ENCODE measurements at regions of chr10 and their contacts with region 1.

Region 1: GRCh38 chr10:71812016-71812912 is 38.8 kb downstream of the PSAP start:
- DNase-seq: peak; percentile 79
- ATAC-seq: peak; percentile 94
- H3K4me3 Mint-ChIP-seq: no peak overlapping the region
- H3K27ac Mint-ChIP-seq: no peak overlapping the region
- H3K4me1 Mint-ChIP-seq: peaks cover 2% of the 10 kb centered on the region
- H3K27me3 Mint-ChIP-seq: no peaks in the 10 kb centered on the region
- CTCF ChIP-seq: no peak

Region 2: GRCh38 chr10:71314028-71314693 is 498.1 kb before region 1 on chr10:
- CTCF ChIA-PET with region 1: interaction called, 14 read pairs
- POLR2A ChIA-PET with region 1: no interaction called
- intact Hi-C with region 1: loop called (anchors 1 kb)
- DNase-seq: peak; percentile 29
- ATAC-seq: peak; percentile 40
- H3K4me3 Mint-ChIP-seq: no peak overlapping the region
- H3K27ac Mint-ChIP-seq: no peak overlapping the region
- H3K4me1 Mint-ChIP-seq: peaks cover 15% of the 10 kb centered on the region
- H3K27me3 Mint-ChIP-seq: peaks cover 10% of the 10 kb centered on the region
- CTCF ChIP-seq: no peak

Region 3: DNA sequence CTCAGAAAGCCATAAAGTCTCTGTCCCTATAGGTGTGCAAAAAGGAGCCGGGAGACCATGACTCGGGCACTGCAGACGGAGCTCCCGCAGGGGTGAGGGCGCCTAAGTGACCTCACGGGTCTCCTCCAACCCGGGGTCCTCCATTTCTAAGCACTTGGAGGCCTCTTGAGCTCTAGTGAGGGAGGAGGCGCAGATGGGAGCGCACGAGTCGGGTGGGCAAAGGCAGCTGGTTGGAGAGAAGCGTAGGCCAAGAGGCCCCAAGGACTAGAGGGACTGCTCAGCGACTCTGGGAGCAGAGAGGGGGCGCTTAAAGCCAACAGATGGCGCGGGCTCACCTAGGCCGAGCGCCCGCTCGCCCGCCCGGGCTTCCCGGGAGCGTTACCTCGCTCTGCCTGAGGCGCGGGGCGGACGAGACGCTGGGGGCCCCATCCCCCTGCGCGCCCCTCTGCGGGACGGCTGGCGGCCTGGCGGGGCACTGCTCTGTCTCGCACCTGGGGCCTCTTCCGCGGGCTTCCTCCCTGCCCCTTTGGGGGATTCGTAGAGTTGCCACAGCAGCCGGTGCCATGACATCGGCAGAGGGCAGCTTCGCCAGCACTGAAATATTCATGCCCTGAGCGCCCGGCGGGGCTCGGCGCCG is 416.1 kb before region 1 on chr10:
- CTCF ChIA-PET with region 1: no interaction called
- POLR2A ChIA-PET with region 1: no interaction called
- intact Hi-C with region 1: loop called (anchors 5 kb)
- DNase-seq: peak; percentile 54
- ATAC-seq: peak; percentile 71
- H3K4me3 Mint-ChIP-seq: peak overlapping the region; percentile 78
- H3K27ac Mint-ChIP-seq: no peak overlapping the region
- H3K4me1 Mint-ChIP-seq: peaks cover 8% of the 10 kb centered on the region
- H3K27me3 Mint-ChIP-seq: peaks cover 52% of the 10 kb centered on the region
- CTCF ChIP-seq: no peak

Region 4: DNA sequence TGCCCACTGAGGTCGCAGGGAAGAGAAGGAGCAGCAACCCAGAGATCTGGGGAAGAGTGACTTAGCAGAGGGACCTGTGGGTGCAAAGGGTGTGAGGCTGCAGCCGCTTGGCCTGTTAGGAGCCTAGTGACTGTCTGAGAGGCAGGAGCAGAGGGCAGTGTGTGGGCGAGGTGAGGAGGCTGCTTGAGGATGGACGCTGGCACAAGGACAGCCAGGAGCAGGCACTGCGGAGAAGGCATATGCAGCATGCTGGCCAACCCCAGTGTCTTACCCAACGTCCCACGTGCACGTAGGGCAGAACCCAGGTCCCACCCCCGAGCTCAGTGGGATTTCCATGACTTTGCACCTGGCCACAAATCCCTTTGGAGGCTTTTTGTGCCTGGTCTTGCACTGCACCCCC is 146.8 kb before region 1 on chr10:
- CTCF ChIA-PET with region 1: interaction called, 10 read pairs
- POLR2A ChIA-PET with region 1: no interaction called
- intact Hi-C with region 1: loop called (anchors 1 kb)
- DNase-seq: no peak
- ATAC-seq: no peak
- H3K4me3 Mint-ChIP-seq: no peak overlapping the region
- H3K27ac Mint-ChIP-seq: peak overlapping the region; percentile 30
- H3K4me1 Mint-ChIP-seq: peaks cover 17% of the 10 kb centered on the region
- H3K27me3 Mint-ChIP-seq: no peaks in the 10 kb centered on the region
- CTCF ChIP-seq: no peak

Region 5: DNA sequence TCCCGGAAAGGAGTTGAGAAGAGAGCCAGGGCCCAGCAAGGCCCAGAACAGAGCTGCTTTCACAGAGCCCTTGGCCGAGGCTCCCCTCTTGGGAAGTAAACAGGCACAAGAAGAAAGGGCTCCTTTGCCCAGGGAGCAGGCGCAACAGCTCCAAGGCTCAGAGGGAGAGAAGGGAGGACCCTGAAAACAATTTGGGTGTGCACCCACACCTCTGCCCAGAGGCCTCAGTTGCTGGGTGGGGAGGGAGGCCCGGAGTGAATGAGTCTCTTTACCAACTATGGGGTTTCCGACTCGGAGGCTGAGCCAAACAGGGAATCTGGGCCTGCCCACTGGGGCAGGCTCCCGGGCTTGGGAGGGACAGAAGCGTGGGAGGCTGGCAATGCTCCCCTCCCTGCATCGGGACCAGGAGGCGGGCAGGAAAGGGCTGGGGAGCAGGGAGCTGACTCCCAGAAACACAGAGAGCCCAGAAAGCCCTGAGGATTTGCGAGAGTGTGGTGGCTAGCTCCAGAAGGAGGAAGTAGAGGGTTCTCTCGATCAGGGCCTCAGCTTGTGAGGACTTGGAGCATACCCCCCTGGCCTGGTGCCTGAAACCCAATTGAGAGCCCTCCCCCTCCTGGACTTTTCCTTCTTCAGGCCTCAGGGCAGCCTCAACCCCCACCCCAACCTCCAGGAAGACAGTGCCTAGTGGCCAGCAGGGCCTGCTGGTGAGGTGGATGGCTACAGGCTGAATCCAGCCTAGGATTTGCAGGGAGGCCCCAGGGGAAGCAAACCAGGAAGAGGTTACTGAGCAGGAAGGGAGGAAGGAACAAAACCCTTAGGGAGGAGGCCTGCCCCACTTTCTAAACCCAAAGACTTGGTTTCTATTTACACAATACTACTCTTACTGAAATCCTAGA is 98.9 kb before region 1 on chr10:
- CTCF ChIA-PET with region 1: interaction called, 47 read pairs
- POLR2A ChIA-PET with region 1: no interaction called
- intact Hi-C with region 1: loop called (anchors 1 kb)
- DNase-seq: no peak
- ATAC-seq: peak; percentile 45
- H3K4me3 Mint-ChIP-seq: no peak overlapping the region
- H3K27ac Mint-ChIP-seq: no peak overlapping the region
- H3K4me1 Mint-ChIP-seq: peaks cover 41% of the 10 kb centered on the region
- H3K27me3 Mint-ChIP-seq: no peaks in the 10 kb centered on the region
- CTCF ChIP-seq: no peak

Region 6: DNA sequence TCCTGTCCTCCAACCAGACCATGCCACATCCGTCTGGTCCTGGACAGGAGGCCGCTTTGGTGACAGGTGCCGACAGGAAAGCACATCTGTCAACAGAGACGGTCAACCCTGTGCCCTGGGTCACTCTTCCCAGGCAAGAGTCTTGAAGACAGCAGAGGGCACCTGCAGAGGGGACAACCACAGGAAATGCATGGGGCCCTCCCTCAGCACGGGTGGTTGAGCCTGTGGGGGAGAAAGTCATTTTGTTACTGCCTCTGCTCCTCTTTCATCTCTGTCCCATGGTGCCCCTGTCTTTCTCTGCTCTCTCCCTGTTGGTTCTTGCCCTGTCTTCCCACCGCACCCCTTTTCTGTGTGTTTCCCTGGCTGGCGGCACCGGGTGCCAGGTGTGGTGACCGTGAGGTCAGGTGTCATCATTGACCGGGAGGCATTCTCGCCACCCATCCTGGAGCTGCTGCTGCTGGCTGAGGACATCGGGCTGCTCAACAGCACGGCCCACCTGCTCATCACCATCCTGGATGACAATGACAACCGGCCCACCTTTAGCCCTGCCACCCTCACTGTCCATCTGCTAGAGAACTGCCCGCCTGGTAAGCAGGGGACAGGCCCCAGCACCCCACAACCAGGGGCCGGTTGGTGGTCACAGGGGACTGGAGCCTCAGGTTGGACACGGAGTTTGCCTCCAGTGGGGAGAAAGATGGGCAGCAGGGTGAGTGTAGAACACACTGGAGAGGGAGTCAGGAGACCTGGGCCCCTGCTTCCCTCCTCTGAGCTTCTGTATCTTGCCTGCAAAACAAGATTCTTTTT is 21.3 kb before region 1 on chr10:
- CTCF ChIA-PET with region 1: interaction called, 4 read pairs
- POLR2A ChIA-PET with region 1: interaction called, 11 read pairs
- intact Hi-C with region 1: no loop called
- DNase-seq: no peak
- ATAC-seq: peak; percentile 90
- H3K4me3 Mint-ChIP-seq: peak overlapping the region; percentile 50
- H3K27ac Mint-ChIP-seq: peak overlapping the region; percentile 53
- H3K4me1 Mint-ChIP-seq: peaks cover 19% of the 10 kb centered on the region
- H3K27me3 Mint-ChIP-seq: no peaks in the 10 kb centered on the region
- CTCF ChIP-seq: no peak

Region 7: DNA sequence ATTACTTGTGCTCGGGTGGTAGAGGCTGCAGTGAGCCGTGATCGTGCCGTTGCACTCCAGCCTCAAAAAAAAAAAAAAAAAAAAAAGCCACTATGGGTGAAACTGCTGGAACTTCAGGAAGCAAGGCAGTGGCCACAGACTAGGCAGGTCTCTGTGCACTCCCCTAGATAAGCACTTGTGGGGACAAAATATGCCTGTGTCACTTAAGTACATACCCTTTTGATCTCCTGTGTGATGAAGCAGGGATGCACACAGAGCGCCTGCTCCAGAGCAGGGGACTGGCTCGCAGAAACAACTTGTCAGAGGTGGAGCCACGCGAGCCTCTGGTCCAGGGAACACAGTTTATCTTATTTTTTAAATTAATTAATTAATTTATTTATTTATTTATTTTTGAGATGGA is 81.7 kb after region 1 on chr10:
- CTCF ChIA-PET with region 1: interaction called, 42 read pairs
- POLR2A ChIA-PET with region 1: interaction called, 8 read pairs
- intact Hi-C with region 1: loop called (anchors 1 kb)
- DNase-seq: no peak
- ATAC-seq: no peak
- H3K4me3 Mint-ChIP-seq: no peak overlapping the region
- H3K27ac Mint-ChIP-seq: no peak overlapping the region
- H3K4me1 Mint-ChIP-seq: peaks cover 20% of the 10 kb centered on the region
- H3K27me3 Mint-ChIP-seq: peaks cover 2% of the 10 kb centered on the region
- CTCF ChIP-seq: no peak

Measured in activated B cell treated with CpG ODN at 0.5 μM for 24 hours (primary cell).